Heart left ventricle (tissue), 16 donors: ENCODE measurements at regions of chr5 and their contacts with region 1.

Region 1: DNA sequence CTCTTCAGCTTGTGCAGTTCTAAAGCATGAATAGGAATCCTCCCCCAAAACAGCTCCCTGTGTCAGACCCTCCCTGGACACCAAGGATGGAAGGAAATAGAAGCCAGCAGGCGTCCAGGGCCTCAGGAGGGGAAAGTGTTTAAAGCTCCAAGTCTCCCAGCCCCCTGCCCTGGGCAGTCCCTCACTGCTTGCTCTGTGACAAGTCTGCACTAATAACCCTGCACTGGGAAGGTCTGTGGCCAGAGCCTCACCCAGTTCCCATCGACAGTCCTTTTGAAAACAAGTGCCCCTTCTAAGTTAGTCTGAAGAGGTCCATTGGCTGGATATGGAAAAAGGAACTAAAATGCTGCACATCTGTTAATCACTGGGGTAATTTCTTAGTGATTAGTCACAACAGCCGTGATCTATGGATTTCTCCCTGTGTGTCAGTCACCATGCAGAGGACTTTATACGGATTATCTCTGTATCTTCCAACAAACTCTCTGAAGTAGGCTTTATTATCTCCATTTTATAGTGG is 195.3 kb downstream of the FBXL7 start:
- DNase-seq: no peak
- ATAC-seq: peak; percentile 37 to 57 (median 42)
- H3K4me3 ChIP-seq: no peak overlapping the region
- H3K27ac ChIP-seq: peak overlapping the region in 10 of 12 donors; percentile 0 to 65 (median 46)
- H3K4me1 ChIP-seq: peaks cover 0 to 58% (median 35%) of the 10 kb centered on the region in 12 donors
- H3K27me3 ChIP-seq: no peaks in the 10 kb centered on the region
- CTCF ChIP-seq: no peak
- POLR2A ChIP-seq: no peak

Region 2: GRCh38 chr5:15737871-15738664 is 42.8 kb after region 1 on chr5:
- intact Hi-C with region 1: loop called in 1 of 10 experiments (anchors 5 kb)
- DNase-seq: no peak
- ATAC-seq: peak; percentile 29 to 73 (median 54)
- H3K4me3 ChIP-seq: peak overlapping the region in 2 of 12 donors; percentile 2
- H3K27ac ChIP-seq: no peak overlapping the region
- H3K4me1 ChIP-seq: peaks cover 0 to 31% (median 15%) of the 10 kb centered on the region in 12 donors
- H3K27me3 ChIP-seq: no peaks in the 10 kb centered on the region
- CTCF ChIP-seq: no peak
- POLR2A ChIP-seq: no peak

Region 3: DNA sequence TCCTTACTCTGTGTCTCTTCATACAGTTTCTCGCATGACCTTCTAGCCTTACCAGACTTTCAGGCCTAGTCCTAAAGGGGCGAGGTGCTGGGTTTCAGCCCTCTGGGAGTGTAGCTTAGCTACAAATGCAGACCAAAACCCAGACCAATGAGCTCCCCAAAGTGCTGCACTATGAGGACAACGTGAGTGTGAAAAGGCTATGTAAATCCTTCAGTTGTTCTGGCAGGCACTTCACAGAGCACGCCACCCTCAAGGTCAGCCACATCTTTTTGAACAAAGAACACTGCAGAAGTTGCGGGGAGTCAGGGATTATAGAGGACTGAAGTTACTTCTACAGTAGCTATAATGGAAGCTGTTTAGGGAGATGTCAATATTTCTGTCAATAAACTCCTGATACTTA is 182.6 kb after region 1 on chr5:
- intact Hi-C with region 1: no loop called
- DNase-seq: no peak
- ATAC-seq: peak in 3 of 4 donors; percentile 32 to 58 (median 51)
- H3K4me3 ChIP-seq: no peak overlapping the region
- H3K27ac ChIP-seq: no peak overlapping the region
- H3K4me1 ChIP-seq: peaks cover 0 to 10% (median 0%) of the 10 kb centered on the region in 12 donors
- H3K27me3 ChIP-seq: no peaks in the 10 kb centered on the region
- CTCF ChIP-seq: no peak
- POLR2A ChIP-seq: no peak